Activated naive CD4-positive, alpha-beta T cell treated with anti-CD3 and anti-CD28 coated beads for 36 hours (primary cell): ENCODE measurements at regions of chr18 and their contacts with region 1.

Region 1: GRCh38 chr18:76721207-76721996 is 101.0 kb upstream of the ZNF236 start:
- DNase-seq: peak; percentile 77
- H3K4me3 Mint-ChIP-seq: peak overlapping the region; percentile 23
- H3K27ac Mint-ChIP-seq: peak overlapping the region; percentile 21
- H3K4me1 Mint-ChIP-seq: peaks cover 40% of the 10 kb centered on the region
- H3K27me3 Mint-ChIP-seq: no peaks in the 10 kb centered on the region

Region 2: DNA sequence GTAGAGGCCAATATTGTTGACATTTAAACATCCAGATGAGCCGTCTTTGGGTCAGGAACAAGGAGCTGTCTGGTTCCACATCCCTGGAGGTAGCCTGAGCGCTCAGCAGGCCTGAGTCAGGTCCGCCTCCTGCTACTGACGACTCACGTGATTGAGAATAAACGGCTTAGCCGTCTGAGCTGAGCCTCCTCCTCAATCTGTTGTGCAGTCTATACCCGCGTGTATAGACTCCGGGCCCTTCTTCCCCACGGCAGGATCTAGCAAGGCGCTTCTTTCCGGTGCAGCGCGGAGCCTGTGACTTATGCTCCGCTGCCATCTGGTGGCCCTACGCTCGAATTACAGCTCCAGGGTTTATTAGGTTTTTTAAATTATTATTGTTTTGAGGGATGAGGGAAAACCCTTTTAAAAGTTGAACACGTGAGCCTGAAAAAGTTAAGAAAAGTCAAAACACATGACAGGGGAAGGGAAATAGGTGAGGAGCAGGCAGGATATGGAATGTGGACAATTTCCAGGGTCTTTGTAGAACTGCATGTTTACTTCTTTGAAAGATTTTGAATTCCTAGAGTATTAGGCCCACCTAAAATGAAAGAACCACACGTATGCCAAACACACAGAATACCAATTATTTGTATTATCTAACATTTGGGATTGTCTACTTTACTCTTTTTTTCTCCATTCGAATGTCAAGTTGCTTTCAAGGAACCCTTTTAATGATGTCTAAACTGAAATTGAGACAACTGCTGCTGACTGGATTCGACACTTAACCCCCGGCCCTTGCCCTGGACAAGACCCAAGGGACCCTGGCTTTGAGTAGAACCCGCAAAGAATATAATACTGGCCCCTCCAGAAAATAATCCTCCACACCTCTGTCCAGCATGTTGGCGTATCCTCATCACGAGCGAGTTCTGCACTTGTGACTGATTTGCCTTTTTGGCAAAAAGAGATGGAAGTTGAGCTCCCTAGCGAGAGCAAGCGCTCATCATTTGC is 11.4 kb before region 1 on chr18:
- CTCF ChIA-PET with region 1: interaction called, 18 read pairs
- intact Hi-C with region 1: no loop called
- DNase-seq: peak; percentile 75
- H3K4me3 Mint-ChIP-seq: no peak overlapping the region
- H3K27ac Mint-ChIP-seq: no peak overlapping the region
- H3K4me1 Mint-ChIP-seq: peaks cover 4% of the 10 kb centered on the region
- H3K27me3 Mint-ChIP-seq: no peaks in the 10 kb centered on the region